ENCODE measurements at regions of chr3 and their contacts with region 1.

Region 1: GRCh38 chr3:168847291-168847883 is 751.7 kb upstream of the GOLIM4 start:
- DNase-seq: peak; percentile 47
- H3K4me3 Mint-ChIP-seq: no peak overlapping the region
- H3K27ac Mint-ChIP-seq: no peak overlapping the region
- H3K4me1 Mint-ChIP-seq: peaks cover 14% of the 10 kb centered on the region
- H3K27me3 Mint-ChIP-seq: peaks cover 29% of the 10 kb centered on the region
- CTCF ChIP-seq: peak; percentile 72

Region 2: DNA sequence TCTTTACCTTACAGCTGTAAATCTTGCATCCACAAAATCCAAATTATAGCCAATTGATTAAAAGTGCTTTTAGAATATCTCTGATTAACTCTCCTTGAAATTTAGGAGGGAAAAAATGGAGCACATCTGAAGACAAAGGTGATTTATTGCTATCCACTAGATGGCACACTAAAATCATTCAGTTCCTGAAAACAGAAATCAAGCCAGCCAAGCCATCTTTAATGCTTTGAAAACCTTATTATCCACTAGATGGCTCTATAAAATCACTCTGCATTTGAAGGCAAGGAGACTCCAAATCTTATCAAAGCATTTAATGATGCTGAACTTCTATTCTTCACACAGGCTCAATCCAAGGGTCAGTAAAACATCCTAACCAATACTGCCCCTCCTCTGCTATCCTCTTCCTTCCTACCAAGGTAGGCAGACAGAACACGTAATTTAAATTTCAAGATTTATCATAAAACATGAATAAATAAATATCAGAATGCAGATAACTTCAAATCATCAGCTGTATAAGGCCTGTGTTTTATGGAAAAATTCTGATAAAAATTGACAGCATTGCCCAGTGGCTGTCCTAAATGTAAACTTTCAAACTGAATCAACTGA is 800.1 kb before region 1 on chr3:
- CTCF ChIA-PET with region 1: no interaction called
- intact Hi-C with region 1: loop called (anchors 1 kb)
- DNase-seq: peak; percentile 36
- H3K4me3 Mint-ChIP-seq: no peak overlapping the region
- H3K27ac Mint-ChIP-seq: no peak overlapping the region
- H3K4me1 Mint-ChIP-seq: no peaks in the 10 kb centered on the region
- H3K27me3 Mint-ChIP-seq: no peaks in the 10 kb centered on the region
- CTCF ChIP-seq: peak; percentile 81

Region 3: GRCh38 chr3:168095611-168096209 is 751.7 kb before region 1 on chr3 and contains the start of gene GOLIM4:
- CTCF ChIA-PET with region 1: no interaction called
- intact Hi-C with region 1: no loop called
- DNase-seq: peak; percentile 99
- H3K4me3 Mint-ChIP-seq: peak within 1 kb of the TSS; percentile 99
- H3K27ac Mint-ChIP-seq: peak within 1 kb of the TSS; percentile 95
- H3K4me1 Mint-ChIP-seq: peaks cover 32% of the 10 kb centered on the region
- H3K27me3 Mint-ChIP-seq: no peaks in the 10 kb centered on the region
- CTCF ChIP-seq: no peak
- total RNA-seq, gene GOLIM4: 46.5 and 53.8 TPM in 2 replicates

Region 4: GRCh38 chr3:168213920-168214319 is 633.5 kb before region 1 on chr3:
- CTCF ChIA-PET with region 1: interaction called, 42 read pairs
- intact Hi-C with region 1: loop called (anchors 1 kb)
- DNase-seq: no peak
- H3K4me3 Mint-ChIP-seq: no peak overlapping the region
- H3K27ac Mint-ChIP-seq: no peak overlapping the region
- H3K4me1 Mint-ChIP-seq: no peaks in the 10 kb centered on the region
- H3K27me3 Mint-ChIP-seq: no peaks in the 10 kb centered on the region
- CTCF ChIP-seq: no peak

Region 5: GRCh38 chr3:168467115-168467714 is 380.2 kb before region 1 on chr3:
- CTCF ChIA-PET with region 1: no interaction called
- intact Hi-C with region 1: loop called (anchors 2 kb)
- DNase-seq: peak; percentile 52
- H3K4me3 Mint-ChIP-seq: no peak overlapping the region
- H3K27ac Mint-ChIP-seq: no peak overlapping the region
- H3K4me1 Mint-ChIP-seq: no peaks in the 10 kb centered on the region
- H3K27me3 Mint-ChIP-seq: no peaks in the 10 kb centered on the region
- CTCF ChIP-seq: peak; percentile 14

Region 6: DNA sequence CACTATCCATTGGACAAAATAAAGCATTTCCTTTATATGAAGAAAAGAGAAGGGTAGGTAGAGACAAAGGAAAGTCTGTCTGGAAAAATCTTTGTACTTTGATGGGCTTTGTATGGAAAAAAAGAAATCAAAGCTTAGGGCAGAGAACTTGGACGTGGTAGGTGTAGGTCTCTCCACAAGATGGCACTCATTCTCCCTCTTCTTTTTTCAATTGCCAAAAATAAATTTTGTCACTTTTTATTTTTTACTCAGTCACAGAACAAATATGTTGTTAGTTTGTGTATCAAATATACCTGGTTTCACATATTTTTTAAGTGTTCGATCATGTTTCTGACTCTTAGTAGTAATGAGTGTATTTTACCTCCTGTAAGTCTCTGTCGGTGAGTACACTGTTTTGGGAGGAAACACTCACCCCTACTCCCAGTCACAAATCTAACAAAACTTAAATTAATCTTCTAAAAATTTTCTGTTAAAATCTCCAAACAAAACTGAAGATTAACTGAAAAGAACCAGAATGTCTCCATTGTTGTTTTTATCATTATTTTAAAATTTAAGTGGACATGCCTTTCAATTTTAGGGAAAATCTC is 335.9 kb before region 1 on chr3:
- CTCF ChIA-PET with region 1: interaction called, 19 read pairs
- intact Hi-C with region 1: loop called (anchors 1 kb)
- DNase-seq: peak; percentile 31
- H3K4me3 Mint-ChIP-seq: no peak overlapping the region
- H3K27ac Mint-ChIP-seq: no peak overlapping the region
- H3K4me1 Mint-ChIP-seq: no peaks in the 10 kb centered on the region
- H3K27me3 Mint-ChIP-seq: no peaks in the 10 kb centered on the region
- CTCF ChIP-seq: peak; percentile 75

Region 7: DNA sequence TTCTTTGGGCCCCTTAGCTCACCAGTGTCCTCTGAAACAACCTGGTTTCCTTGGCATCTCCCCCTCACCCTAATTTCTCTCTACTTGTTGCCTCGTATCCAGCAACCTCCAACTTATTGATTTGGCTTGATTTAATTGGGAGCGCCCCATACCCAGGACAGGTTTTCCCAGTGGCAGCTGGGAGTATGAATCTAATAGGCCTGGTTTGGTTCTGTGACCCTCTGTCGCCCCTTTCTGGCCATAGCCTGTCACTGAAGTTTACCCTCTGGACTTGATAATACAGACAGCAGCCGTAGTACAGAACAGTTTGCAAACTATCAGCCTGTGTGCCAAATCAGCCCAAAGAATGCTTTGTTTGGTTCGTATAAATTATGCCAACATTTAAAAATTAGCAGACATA is 226.6 kb before region 1 on chr3:
- CTCF ChIA-PET with region 1: interaction called, 8 read pairs
- intact Hi-C with region 1: loop called (anchors 1 kb)
- DNase-seq: peak; percentile 69
- H3K4me3 Mint-ChIP-seq: no peak overlapping the region
- H3K27ac Mint-ChIP-seq: no peak overlapping the region
- H3K4me1 Mint-ChIP-seq: peaks cover 8% of the 10 kb centered on the region
- H3K27me3 Mint-ChIP-seq: no peaks in the 10 kb centered on the region
- CTCF ChIP-seq: peak; percentile 92

Region 8: GRCh38 chr3:168738527-168739325 is 108.7 kb before region 1 on chr3:
- CTCF ChIA-PET with region 1: interaction called, 10 read pairs
- intact Hi-C with region 1: no loop called
- DNase-seq: no peak
- H3K4me3 Mint-ChIP-seq: no peak overlapping the region
- H3K27ac Mint-ChIP-seq: no peak overlapping the region
- H3K4me1 Mint-ChIP-seq: no peaks in the 10 kb centered on the region
- H3K27me3 Mint-ChIP-seq: no peaks in the 10 kb centered on the region
- CTCF ChIP-seq: no peak

Measured in Calu3 (cell line).